Cardiac septum (tissue), 1 donor: ENCODE measurements at regions of chr14 and their contacts with region 1.

Region 1: DNA sequence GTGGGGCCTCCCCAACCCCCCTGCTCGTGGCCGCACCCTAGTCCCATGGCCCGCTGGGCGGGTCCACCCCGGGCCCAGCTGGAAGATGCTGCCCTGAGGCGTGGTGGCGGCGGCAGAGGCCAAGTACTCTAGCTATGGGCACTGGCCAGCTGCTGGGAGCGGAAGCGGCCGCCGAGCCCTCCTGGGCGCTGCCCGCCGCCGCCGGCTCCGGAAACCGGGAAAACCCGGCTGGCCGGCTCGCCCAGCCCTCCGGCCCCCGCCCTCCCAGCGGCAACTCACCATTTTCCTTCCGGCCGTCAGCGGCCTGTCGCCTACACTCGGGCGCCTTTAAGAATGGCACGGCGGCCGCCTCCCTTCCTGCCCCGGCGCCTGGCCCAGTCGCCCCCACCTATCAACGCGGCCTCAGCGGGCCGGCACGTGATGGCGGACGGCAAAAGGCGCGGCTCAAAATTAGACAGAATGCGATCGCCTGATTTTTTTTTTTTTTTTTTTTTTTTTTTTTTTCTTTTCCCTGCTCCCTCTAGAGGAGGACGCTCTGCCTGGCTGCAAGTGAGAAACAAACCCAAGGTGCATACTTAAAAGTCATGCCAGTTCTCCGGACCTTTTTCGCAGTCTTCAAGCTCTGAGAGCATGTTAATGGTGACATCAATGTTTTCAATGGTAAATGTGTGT is at the start of gene GMFB:
- DNase-seq: peak; percentile 96
- total RNA-seq, gene GMFB: 29.5 TPM

Region 2: GRCh38 chr14:53993920-53994607 is 494.7 kb before region 1 on chr14:
- intact Hi-C with region 1: no loop called
- DNase-seq: no peak

Region 3: GRCh38 chr14:54396493-54397335 is 92.1 kb before region 1 on chr14 and contains the start of gene CDKN3:
- intact Hi-C with region 1: loop called (anchors 5 kb)
- DNase-seq: peak; percentile 98
- total RNA-seq, gene CDKN3: 4.7 TPM

Region 4: DNA sequence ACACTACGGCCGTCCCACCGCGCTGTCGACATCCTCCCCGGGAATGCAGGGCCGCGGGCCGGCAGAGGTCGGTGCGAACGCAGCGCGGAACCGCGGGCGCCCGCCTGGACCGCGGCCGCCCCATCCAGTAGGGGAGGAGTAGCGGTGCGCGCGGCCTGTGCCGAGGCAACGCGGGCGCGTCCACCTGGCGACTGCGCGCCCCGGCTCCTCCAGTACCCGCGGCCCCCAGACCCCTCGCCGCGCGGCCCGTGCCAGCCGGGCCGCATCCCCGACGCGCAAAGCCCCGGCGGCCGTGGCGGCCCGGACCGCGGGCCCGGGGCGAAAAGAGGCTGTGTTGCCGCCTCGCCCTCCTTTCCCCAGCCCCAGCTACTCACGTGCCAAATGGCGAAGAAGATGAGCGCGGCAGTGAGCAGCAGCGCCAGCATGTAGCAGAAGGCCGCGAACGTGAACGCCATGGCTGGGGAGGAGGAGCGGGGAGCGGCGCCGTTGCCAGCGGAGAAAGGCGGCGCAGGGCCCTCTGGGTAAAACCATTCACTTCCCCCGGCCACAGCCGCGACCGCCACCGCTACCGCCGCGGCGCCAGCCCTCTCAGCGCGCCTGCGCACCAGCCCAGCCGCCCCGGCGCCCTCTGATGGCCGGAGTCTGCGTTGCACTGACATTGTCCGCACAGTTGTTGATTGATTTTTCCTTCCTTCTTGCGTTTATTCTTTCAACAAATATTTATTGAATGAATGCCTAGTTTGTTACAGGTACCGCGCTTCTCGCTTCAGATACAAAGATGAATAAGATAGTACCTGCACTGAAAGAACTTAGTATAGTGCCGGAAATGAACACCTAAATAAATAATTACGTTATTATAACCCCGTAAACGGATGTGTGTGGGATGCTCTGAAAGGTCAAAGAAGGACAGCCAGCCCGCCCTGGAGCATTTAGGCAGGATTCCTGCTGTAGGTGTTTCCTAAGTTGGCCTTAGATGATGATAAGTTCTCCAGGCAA is 47.6 kb before region 1 on chr14 and contains the start of gene CNIH1:
- intact Hi-C with region 1: loop called (anchors 1 kb)
- DNase-seq: peak; percentile 96
- total RNA-seq, gene CNIH1: 77.7 TPM

Region 5: DNA sequence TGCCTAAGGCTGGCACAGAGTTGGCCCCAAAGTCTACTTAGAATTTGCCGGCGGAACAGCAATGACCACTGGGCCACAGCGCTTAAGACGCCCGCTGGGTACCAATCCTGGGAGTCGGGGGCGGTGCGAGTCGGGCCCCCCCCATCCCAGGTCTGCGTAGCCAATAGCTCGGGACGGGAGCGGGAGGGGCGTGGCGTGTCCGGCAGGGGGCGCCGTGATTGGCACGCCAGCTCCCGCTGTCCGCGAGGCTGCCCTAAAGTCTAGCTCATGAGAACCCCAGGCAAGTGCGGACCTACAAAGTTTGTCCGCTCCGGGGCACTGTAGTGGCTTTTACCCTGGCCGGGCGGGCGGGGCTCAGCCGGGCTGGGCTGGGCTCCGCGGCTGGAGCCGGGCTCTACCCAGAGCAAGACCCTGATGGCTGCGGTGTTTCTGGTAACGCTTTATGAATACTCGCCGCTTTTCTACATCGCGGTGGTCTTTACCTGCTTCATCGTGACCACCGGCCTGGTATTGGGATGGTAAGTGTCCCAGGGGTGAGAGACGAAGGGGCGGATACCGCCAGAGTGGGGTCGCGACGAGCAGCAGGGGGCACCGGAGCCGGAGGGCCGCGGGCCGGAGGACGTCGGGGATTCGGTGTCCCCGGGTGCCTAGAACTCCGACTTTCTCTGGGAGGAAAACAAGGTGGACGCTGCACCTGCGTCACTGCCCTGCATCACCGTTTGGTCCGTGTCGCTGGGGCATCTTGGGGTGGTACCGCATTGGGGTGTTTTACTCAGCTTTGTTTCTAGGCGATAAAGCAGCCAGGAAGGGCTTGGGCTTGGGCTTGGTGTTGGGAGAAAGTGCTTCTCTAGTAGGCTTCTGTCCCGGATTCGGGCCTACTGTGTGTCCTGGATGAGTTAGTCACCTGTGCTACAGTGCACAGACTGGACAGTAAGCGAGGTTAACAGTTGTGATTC is 21.0 kb after region 1 on chr14 and contains the start of gene CGRRF1:
- intact Hi-C with region 1: loop called (anchors 1 kb)
- DNase-seq: peak; percentile 98
- total RNA-seq, gene CGRRF1: 17.0 TPM

Region 6: DNA sequence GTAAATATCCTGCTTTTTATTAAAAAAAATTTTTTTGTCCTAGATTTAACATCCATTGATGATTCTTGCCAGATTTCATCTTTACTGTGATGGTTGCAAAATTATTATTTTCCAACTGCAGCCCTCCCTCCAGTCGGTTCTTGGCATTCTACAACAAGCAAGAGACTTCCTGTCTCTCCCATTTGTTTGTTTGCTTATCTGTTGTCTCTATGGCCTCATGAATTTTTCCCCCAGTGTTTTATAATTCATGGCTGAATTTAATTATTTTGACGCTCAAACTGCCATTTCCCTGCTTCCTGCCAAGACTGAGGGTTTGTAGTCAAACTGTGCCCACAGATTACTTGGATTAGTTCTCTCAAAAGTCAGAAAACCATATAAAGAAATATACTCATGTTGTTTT is 46.9 kb after region 1 on chr14:
- intact Hi-C with region 1: no loop called
- DNase-seq: no peak